ENCODE measurements at regions of chr10 and their contacts with region 1.

Region 1: GRCh38 chr10:28087661-28088351 is 88.9 kb upstream of the ODAD2 start:
- DNase-seq: peak; percentile 44
- H3K4me3 ChIP-seq: no peak overlapping the region
- H3K27ac ChIP-seq: peak overlapping the region; percentile 99
- H3K4me1 ChIP-seq: peaks cover 40% of the 10 kb centered on the region
- H3K27me3 ChIP-seq: no peaks in the 10 kb centered on the region
- CTCF ChIP-seq: no peak
- POLR2A ChIP-seq: no peak

Region 2: DNA sequence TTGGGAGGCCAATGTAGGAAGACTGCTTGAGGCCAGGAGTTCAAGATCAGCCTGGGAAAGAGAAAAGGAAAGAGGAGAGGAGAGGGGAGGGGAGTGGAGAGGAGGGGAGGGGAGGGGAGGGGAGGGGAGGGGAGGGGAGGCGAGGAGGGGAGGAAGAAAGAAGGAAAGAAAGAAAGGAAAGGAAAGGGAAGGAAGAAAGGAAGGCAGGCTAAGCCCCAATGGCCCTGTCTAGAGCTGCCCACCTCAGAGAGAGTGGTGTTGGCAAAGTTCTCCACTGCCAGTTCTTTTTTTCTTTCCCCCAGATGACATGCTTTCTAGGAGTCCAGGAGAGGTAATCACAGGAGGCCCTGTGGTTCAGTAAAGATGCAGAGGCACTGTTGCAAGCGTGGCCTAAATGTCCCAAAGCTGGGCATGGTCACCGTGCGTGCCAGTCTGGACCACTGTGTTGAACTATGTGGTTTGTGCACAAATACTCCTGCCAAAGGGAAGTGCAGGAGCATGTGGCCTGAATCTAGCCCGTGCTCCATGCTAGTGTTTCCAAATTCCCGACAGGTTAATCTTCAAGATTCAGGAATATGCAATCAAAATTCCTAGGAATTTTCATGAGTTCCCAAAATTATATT is 128.6 kb before region 1 on chr10:
- CTCF ChIA-PET with region 1: no interaction called
- POLR2A ChIA-PET with region 1: no interaction called
- dilution Hi-C with region 1: no loop called
- intact Hi-C with region 1: no loop called
- DNase-seq: no peak
- H3K4me3 ChIP-seq: no peak overlapping the region
- H3K27ac ChIP-seq: no peak overlapping the region
- H3K4me1 ChIP-seq: no peaks in the 10 kb centered on the region
- H3K27me3 ChIP-seq: no peaks in the 10 kb centered on the region
- CTCF ChIP-seq: no peak
- POLR2A ChIP-seq: no peak

Region 3: GRCh38 chr10:27998254-27999004 is 89.4 kb before region 1 on chr10:
- CTCF ChIA-PET with region 1: no interaction called
- POLR2A ChIA-PET with region 1: no interaction called
- dilution Hi-C with region 1: no loop called
- intact Hi-C with region 1: loop called (anchors 1 kb)
- DNase-seq: peak; percentile 51
- H3K4me3 ChIP-seq: peak overlapping the region; percentile 41 to 87 (median 71)
- H3K27ac ChIP-seq: peak overlapping the region; percentile 32
- H3K4me1 ChIP-seq: peaks cover 6% of the 10 kb centered on the region
- H3K27me3 ChIP-seq: no peaks in the 10 kb centered on the region
- CTCF ChIP-seq: no peak
- POLR2A ChIP-seq: peak; percentile 76

Region 4: DNA sequence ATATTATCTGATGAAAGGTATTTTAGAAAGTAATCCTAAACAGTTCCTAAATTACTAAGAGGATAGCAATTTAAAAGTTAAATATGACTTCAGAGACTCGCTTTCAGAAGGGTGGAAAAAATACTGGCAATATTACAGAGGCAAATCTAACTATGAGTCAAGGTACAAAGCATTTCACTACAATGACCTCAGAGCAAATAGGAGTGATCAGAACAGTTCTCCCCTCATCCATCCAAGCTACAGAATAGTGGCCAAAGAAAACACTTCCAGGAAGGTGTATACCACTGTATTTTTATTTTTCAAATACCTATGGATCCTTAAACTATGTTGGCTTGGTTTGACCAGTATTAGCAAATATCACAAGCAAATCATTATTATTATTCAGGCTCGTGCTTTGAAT is 23.9 kb after region 1 on chr10:
- CTCF ChIA-PET with region 1: no interaction called
- POLR2A ChIA-PET with region 1: no interaction called
- dilution Hi-C with region 1: no loop called
- intact Hi-C with region 1: loop called (anchors 1 kb)
- DNase-seq: peak; percentile 53
- H3K4me3 ChIP-seq: no peak overlapping the region
- H3K27ac ChIP-seq: peak overlapping the region; percentile 21
- H3K4me1 ChIP-seq: peaks cover 15% of the 10 kb centered on the region
- H3K27me3 ChIP-seq: no peaks in the 10 kb centered on the region
- CTCF ChIP-seq: no peak
- POLR2A ChIP-seq: no peak

Region 5: GRCh38 chr10:28137907-28138880 is 50.4 kb after region 1 on chr10:
- CTCF ChIA-PET with region 1: interaction called, 3 read pairs
- POLR2A ChIA-PET with region 1: interaction called, 5 read pairs
- dilution Hi-C with region 1: no loop called
- intact Hi-C with region 1: loop called (anchors 1 kb)
- DNase-seq: peak; percentile 60
- H3K4me3 ChIP-seq: peak overlapping the region in 1 of 3 experiments; percentile 17
- H3K27ac ChIP-seq: peak overlapping the region; percentile 76
- H3K4me1 ChIP-seq: peaks cover 45% of the 10 kb centered on the region
- H3K27me3 ChIP-seq: no peaks in the 10 kb centered on the region
- CTCF ChIP-seq: no peak
- POLR2A ChIP-seq: no peak

Measured in endothelial cell of umbilical vein (primary cell).